Activated B cell treated with CpG ODN at 0.5 μM for 24 hours (primary cell): ENCODE measurements at regions of chr1 and their contacts with region 1.

Region 1: DNA sequence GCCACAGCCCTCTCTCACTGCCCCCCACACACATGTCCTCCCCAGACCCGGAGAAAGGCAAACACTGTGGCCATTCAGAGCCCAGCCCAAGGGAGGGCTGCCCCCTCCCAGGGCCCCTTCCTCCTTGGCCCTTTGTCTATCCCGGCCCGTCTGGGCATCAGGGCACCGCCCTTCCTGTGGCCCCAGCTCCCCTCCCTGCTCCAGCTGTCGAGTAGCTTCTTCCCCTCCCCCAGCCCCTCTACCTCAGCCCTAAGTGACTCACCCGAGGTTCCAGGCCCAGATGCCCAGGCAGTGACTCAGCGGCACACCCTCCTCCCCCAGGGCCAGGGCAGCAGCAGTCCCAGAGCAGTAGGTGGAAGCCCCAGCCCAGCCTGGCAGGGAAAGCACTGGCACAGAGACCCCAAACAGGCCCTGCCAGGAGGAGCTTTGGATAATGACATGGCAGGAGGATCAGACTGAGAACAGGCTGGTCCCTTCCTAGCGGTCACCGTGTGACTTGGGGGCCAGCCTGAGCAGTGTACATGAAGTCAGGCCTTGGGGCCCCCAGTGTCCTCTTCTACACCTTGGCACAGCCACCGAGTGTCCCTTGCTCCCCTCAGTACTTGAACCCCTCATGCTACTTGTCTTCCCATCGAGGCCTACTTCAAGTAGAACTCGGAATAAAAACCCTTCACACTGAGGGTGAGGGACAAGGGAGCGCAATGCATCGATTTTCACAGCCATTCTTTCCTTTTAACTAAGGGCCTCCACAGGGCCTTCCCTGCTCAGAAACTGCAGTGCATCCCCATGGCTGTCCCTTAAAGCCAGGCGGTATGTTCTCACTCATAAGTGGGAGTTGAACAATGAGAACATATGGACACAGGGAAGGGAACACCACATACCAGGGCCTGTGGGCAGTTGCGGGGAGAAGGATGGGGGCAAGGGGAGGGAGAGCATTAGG is 1.1 kb upstream of the S100A2 start:
- DNase-seq: peak; percentile 71
- ATAC-seq: peak; percentile 82
- H3K4me3 Mint-ChIP-seq: peak overlapping the region; percentile 70
- H3K27ac Mint-ChIP-seq: peak overlapping the region; percentile 99
- H3K4me1 Mint-ChIP-seq: peaks cover 36% of the 10 kb centered on the region
- H3K27me3 Mint-ChIP-seq: peaks cover 6% of the 10 kb centered on the region
- CTCF ChIP-seq: no peak

Region 2: GRCh38 chr1:153488731-153489130 is 78.0 kb before region 1 on chr1:
- CTCF ChIA-PET with region 1: no interaction called
- POLR2A ChIA-PET with region 1: no interaction called
- intact Hi-C with region 1: no loop called
- DNase-seq: no peak
- ATAC-seq: no peak
- H3K4me3 Mint-ChIP-seq: no peak overlapping the region
- H3K27ac Mint-ChIP-seq: no peak overlapping the region
- H3K4me1 Mint-ChIP-seq: no peaks in the 10 kb centered on the region
- H3K27me3 Mint-ChIP-seq: peaks cover 38% of the 10 kb centered on the region
- CTCF ChIP-seq: no peak

Region 3: GRCh38 chr1:153532769-153533599 is 33.7 kb before region 1 on chr1:
- CTCF ChIA-PET with region 1: interaction called, 119 read pairs
- POLR2A ChIA-PET with region 1: interaction called, 115 read pairs
- intact Hi-C with region 1: loop called (anchors 1 kb)
- DNase-seq: peak; percentile 60
- ATAC-seq: peak; percentile 26
- H3K4me3 Mint-ChIP-seq: peak overlapping the region; percentile 48
- H3K27ac Mint-ChIP-seq: peak overlapping the region; percentile 13
- H3K4me1 Mint-ChIP-seq: peaks cover 45% of the 10 kb centered on the region
- H3K27me3 Mint-ChIP-seq: no peaks in the 10 kb centered on the region
- CTCF ChIP-seq: no peak

Region 4: DNA sequence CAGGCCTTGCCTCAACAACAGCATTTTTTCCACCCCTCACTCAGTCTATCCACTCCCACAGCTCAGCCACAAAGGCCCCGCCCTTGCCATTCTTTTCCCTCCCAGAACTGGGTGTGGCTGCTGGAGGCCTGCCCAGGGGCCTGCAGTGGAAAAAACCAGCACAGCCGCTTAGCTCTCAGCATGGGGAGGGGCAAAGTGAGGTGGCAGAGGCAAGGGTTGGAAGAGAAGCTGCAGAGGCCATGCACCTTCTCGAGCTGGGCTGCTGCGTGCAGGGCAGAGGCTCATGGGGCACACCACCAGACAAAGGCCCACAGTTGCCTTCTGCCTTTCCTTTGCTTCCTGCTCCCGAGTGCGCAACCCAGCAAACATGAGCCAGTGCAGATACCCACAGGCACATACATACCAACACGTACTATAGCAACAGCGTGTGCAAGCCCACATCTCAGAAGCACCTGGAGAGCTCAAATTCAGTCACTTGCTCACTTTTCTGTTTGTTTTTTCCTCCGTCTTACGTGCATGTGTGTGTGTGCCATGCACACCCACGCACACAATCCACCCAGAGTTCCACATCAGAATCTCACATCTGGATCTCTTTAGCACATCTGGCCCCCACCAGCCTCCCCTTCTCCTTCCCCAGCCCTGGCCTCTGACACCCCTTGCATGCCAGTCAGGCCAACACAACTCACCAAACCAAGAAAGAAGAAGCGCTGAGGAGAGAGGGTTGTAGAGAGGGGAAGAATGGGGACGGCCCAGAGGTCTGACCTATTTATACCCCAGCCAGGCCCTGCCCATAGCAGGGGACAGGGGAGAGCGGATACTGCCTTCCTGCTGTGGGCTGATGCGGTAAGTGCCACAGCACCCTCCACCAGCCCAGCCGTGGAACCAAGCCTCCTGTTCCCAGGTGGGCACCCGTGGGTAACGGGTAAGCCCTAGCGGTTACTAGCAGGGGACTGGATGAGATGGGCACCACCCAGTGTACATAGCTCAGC is 21.3 kb before region 1 on chr1 and contains the start of gene S100A4:
- CTCF ChIA-PET with region 1: interaction called, 9 read pairs
- POLR2A ChIA-PET with region 1: interaction called, 49 read pairs
- intact Hi-C with region 1: loop called (anchors 1 kb)
- DNase-seq: peak; percentile 56
- ATAC-seq: peak; percentile 78
- H3K4me3 Mint-ChIP-seq: peak within 1 kb of the TSS; percentile 95
- H3K27ac Mint-ChIP-seq: peak within 1 kb of the TSS; percentile 97
- H3K4me1 Mint-ChIP-seq: peaks cover 58% of the 10 kb centered on the region
- H3K27me3 Mint-ChIP-seq: peaks cover 2% of the 10 kb centered on the region
- CTCF ChIP-seq: no peak
- total RNA-seq, gene S100A4: 315 and 398 TPM in 2 replicates

Region 5: GRCh38 chr1:153583976-153584375 is 17.3 kb after region 1 on chr1:
- CTCF ChIA-PET with region 1: no interaction called
- POLR2A ChIA-PET with region 1: no interaction called
- intact Hi-C with region 1: no loop called
- DNase-seq: no peak
- ATAC-seq: no peak
- H3K4me3 Mint-ChIP-seq: no peak overlapping the region
- H3K27ac Mint-ChIP-seq: no peak overlapping the region
- H3K4me1 Mint-ChIP-seq: no peaks in the 10 kb centered on the region
- H3K27me3 Mint-ChIP-seq: no peaks in the 10 kb centered on the region
- CTCF ChIP-seq: no peak

Region 6: DNA sequence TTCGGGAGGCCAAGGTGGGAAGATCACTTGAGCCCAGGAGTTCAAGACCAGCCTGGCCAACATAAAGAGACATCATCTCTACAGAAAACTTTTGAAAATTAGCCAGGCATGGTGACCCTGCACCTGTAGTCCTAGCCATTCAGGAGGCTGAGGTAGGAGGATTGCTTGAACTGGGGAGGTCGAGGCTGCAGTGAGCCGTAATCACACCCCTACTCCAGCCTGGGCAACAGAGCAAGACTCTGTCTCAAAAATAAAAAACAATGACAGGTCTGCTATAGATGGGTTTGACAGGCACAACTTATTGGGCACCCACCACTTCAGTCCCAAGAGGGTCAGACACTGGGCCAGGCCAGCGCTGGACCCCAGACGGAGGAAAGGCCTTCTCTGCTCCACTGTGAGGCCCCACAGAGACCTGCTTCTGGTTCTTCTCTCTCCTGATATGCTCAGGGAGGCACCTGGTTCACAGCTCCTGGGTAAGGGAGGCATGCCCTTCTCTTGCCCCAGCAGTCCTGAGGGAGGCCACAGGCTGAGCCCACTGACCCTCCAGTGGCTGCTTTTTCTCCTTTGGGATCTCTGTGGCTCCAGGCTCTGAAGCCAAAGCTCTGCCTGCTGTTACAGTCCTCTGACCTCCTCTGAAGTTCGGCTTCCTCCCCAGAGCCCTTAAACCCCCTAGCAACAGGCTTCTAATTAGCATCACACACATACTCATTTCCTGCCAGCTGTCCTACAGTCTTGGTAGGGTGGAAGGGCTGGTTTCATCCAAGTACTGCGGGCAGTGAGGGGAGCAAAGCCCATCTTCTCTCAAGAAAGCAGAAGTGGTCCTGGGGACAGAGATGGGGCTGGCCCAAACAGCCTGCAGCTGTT is 31.8 kb after region 1 on chr1:
- CTCF ChIA-PET with region 1: interaction called, 6 read pairs
- POLR2A ChIA-PET with region 1: interaction called, 24 read pairs
- intact Hi-C with region 1: no loop called
- DNase-seq: peak; percentile 57
- ATAC-seq: peak; percentile 92
- H3K4me3 Mint-ChIP-seq: peak overlapping the region; percentile 73
- H3K27ac Mint-ChIP-seq: peak overlapping the region; percentile 96
- H3K4me1 Mint-ChIP-seq: peaks cover 48% of the 10 kb centered on the region
- H3K27me3 Mint-ChIP-seq: no peaks in the 10 kb centered on the region
- CTCF ChIP-seq: no peak

Region 7: DNA sequence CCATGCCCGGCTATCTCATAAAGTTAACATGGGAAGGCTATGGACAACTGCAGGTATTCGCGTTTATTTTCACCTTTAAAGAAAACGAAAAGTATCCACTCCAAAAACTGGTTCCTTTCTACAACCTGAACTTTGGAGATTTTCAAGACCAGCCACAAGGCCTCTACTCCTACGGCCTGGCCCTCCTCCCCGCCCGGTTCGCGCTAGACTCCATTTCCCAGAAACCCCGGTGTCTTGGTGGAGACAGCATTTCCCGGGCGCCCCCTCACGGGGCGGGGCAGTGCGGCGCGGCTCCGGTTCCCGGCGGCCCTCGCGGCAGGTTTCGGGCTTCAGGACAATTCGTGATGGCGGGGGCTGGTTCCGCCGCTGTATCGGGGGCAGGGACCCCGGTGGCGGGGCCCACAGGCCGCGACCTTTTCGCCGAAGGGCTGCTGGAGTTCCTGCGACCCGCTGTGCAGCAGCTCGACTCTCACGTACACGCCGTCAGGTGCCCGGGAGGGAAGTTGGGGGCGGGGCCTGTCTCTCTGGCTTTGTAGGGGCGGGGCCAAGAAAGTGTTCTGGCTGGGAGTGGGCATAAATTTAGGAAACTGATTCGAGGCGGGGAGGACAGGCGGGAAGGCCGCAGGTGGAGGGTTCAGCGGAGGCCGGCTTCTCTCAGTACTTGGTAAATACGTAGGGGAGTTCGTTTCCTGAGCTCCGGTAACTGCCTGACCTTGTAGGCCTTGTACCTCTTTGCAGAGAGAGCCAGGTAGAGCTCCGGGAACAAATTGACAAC is 91.9 kb after region 1 on chr1 and contains the start of gene SNAPIN:
- CTCF ChIA-PET with region 1: interaction called, 9 read pairs
- POLR2A ChIA-PET with region 1: interaction called, 12 read pairs
- intact Hi-C with region 1: loop called (anchors 5 kb)
- DNase-seq: peak; percentile 94
- ATAC-seq: peak; percentile 99
- H3K4me3 Mint-ChIP-seq: peak within 1 kb of the TSS; percentile 96
- H3K27ac Mint-ChIP-seq: peak within 1 kb of the TSS; percentile 91
- H3K4me1 Mint-ChIP-seq: peaks cover 14% of the 10 kb centered on the region
- H3K27me3 Mint-ChIP-seq: no peaks in the 10 kb centered on the region
- CTCF ChIP-seq: no peak
- total RNA-seq, gene SNAPIN: 50.4 and 51.5 TPM in 2 replicates